Mammary epithelial cell (primary cell): ENCODE measurements at regions of chr2 and their contacts with region 1.

Region 1: DNA sequence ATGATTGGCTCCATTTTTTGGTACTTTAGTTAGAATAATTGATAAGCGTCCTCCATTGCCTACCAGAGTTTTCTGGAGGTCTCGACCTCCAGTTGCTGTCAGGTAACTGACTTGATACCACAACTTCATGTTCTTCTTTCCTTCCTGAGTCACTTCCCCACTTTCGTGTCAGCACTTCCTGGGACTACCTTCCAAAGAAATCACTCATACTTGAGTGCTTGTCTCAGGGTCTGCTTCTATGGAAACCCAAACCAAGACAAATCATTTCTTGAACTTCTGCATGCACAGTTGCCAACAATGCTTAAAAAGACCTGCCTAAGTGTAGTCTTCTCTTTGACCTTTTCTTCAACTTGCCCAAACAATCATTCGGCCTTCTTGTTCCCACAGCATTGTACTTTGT is 210.3 kb upstream of the ETAA1 start:
- DNase-seq: peak; percentile 19
- H3K4me3 ChIP-seq: no peak overlapping the region
- H3K27ac ChIP-seq: no peak overlapping the region
- H3K4me1 ChIP-seq: no peaks in the 10 kb centered on the region
- H3K27me3 ChIP-seq: no peaks in the 10 kb centered on the region
- CTCF ChIP-seq: no peak

Region 2: DNA sequence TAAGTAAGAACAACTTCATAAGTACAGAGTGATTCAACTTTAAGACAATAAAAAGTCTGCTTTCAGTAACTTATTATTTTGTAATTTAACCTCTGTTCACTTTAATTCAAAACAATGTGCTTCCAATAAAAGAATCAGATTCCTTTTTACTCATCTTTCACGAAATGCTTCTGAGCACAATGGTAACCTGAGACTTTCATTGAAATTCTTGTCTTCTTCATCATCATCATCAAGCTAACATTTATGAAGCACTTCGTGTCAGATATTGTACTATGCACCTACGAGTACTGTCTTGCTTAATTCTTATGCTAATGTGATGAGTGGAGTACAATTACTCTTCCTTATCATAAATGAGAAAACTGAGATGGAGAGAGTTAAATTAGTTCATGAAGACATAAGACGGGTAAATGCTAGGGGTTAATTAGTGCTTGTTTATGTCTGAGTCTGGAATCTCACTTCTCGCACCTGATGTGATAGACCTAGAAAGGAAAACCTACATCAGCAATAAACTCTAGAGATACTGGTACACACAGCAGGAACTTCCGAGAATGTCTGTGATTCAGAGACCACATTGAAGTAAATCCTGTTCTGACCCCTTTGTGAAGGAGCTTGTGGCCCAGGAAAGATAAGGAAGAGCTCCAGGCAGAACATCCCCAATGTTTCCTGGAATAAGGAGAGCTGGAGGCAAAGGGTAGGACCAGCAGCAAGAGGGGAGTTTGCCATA is 17.3 kb before region 1 on chr2:
- CTCF ChIA-PET with region 1: interaction called, 39 read pairs
- dilution Hi-C with region 1: no loop called
- in situ Hi-C with region 1: no loop called
- intact Hi-C with region 1: no loop called
- DNase-seq: peak; percentile 8
- H3K4me3 ChIP-seq: no peak overlapping the region
- H3K27ac ChIP-seq: no peak overlapping the region
- H3K4me1 ChIP-seq: no peaks in the 10 kb centered on the region
- H3K27me3 ChIP-seq: no peaks in the 10 kb centered on the region
- CTCF ChIP-seq: no peak